CD4-positive, alpha-beta memory T cell (primary cell): ENCODE measurements at regions of chr4 and their contacts with region 1.

Region 1: DNA sequence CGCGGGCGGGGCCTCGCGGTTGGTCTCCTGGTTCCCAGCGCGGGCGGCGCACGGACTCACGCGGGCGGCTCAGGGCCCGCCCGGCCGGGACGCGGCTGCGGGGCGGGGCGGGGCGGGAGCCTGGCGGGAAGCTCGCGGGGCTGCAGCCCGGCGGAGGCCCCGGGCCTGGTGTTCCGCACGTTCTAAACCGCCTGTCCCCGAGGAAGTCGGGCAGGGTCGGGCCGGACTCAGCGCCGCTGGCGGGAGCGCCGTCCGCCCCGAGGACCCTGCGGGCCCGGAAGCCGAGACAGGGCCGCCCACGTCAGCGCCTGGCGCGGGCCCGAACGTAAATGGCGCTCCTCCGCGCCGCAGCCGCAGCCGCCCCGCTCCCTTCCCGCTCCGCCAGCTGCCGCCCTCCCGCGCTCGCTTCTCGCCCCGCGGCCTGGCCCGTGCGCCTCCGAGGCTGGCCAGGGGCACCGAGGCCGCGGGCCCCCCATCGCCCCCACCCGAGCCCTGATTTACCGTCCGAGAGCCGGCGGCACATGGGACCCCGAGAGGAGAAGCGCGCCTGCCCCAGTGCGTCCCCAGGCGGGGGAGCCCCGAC is 309 bp upstream of the CTBP1 start:
- DNase-seq: peak; percentile 77 to 93 (median 90)
- H3K4me3 ChIP-seq: peak overlapping the region; percentile 68 to 73
- H3K4me3 Mint-ChIP-seq: peak overlapping the region; percentile 86 to 92 (median 90)
- H3K27ac ChIP-seq: peak overlapping the region; percentile 88
- H3K27ac Mint-ChIP-seq: peak overlapping the region; percentile 93 to 99 (median 96)
- H3K4me1 ChIP-seq: peaks cover 74% of the 10 kb centered on the region
- H3K4me1 Mint-ChIP-seq: peaks cover 39 to 79% (median 67%) of the 10 kb centered on the region in 4 donors
- H3K27me3 ChIP-seq: no peaks in the 10 kb centered on the region
- H3K27me3 Mint-ChIP-seq: no peaks in the 10 kb centered on the region

Region 2: GRCh38 chr4:1200425-1201035 is 48.7 kb before region 1 on chr4:
- CTCF ChIA-PET with region 1: no interaction called
- POLR2A ChIA-PET with region 1: interaction called, 79 read pairs
- intact Hi-C with region 1: loop called (anchors 1 kb)
- DNase-seq: no peak
- H3K4me3 ChIP-seq: peak overlapping the region; percentile 49 to 58
- H3K4me3 Mint-ChIP-seq: peak overlapping the region; percentile 68 to 89 (median 82)
- H3K27ac ChIP-seq: peak overlapping the region; percentile 50
- H3K27ac Mint-ChIP-seq: peak overlapping the region; percentile 64 to 100 (median 98)
- H3K4me1 ChIP-seq: peaks cover 56% of the 10 kb centered on the region
- H3K4me1 Mint-ChIP-seq: peaks cover 23 to 61% (median 40%) of the 10 kb centered on the region in 4 donors
- H3K27me3 ChIP-seq: no peaks in the 10 kb centered on the region
- H3K27me3 Mint-ChIP-seq: no peaks in the 10 kb centered on the region

Region 3: GRCh38 chr4:1266881-1267763 is 17.9 kb after region 1 on chr4:
- CTCF ChIA-PET with region 1: interaction called, 42 read pairs
- POLR2A ChIA-PET with region 1: interaction called, 61 read pairs
- intact Hi-C with region 1: loop called (anchors 1 kb)
- DNase-seq: peak in 2 of 5 donors; percentile 25 to 36
- H3K4me3 ChIP-seq: peak overlapping the region in 1 of 2 donors; percentile 62
- H3K4me3 Mint-ChIP-seq: peak overlapping the region; percentile 75 to 90 (median 88)
- H3K27ac ChIP-seq: peak overlapping the region; percentile 63
- H3K27ac Mint-ChIP-seq: peak overlapping the region; percentile 94 to 100 (median 95)
- H3K4me1 ChIP-seq: peaks cover 12% of the 10 kb centered on the region
- H3K4me1 Mint-ChIP-seq: peaks cover 9 to 19% (median 12%) of the 10 kb centered on the region in 4 donors
- H3K27me3 ChIP-seq: no peaks in the 10 kb centered on the region
- H3K27me3 Mint-ChIP-seq: no peaks in the 10 kb centered on the region

Region 4: DNA sequence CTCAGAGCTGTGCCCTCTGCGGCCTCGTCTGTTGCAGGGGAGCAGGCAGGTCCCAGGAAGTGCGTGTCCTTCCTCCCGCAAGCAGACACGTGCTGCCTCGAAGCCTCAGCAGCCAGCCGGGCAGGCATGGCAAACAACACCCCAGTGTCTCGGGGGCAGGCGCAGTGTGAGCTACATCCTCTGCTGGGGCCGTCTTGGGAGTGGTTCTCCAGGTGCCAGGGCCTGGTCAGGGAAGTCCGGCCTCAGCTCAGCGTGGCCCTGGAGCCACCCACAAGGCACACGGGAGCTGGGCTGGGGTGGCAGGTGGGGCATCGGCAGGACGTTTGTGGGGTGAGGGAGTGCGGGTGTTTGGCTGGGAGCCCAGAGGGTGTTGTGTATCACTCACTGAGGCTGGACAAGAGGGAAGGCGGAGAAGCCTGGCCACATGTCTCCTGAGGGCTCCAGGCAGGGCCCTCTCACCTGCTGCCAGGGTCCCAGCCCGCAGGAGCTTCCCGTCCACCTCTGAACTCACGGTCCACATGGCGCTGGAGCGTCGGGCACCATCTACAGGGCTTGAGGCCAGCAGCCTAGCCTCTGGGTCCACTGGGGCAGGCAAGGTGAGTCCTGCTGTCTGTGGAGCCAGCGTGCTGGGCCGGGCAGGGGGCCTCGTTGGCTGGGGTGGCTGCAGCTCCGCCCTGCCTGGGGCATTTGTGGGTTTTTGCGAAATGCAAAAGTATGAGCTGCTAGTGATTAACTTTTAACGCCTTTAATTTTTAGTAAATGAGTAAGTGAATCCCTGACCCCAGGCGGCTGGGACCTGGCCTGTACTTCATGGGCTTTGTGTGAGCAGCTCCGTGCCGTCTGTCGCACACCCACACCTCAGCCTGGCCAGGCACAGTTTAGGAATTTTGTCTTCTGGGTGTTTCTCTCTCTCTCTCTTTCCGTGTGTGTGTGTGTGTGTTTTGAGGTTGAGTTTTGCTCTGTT is 80.5 kb after region 1 on chr4:
- CTCF ChIA-PET with region 1: no interaction called
- POLR2A ChIA-PET with region 1: interaction called, 33 read pairs
- intact Hi-C with region 1: no loop called
- DNase-seq: peak; percentile 51 to 77 (median 57)
- H3K4me3 ChIP-seq: no peak overlapping the region
- H3K4me3 Mint-ChIP-seq: peak overlapping the region; percentile 26 to 88 (median 82)
- H3K27ac ChIP-seq: peak overlapping the region; percentile 47
- H3K27ac Mint-ChIP-seq: peak overlapping the region; percentile 86 to 100 (median 97)
- H3K4me1 ChIP-seq: peaks cover 46% of the 10 kb centered on the region
- H3K4me1 Mint-ChIP-seq: peaks cover 18 to 53% (median 32%) of the 10 kb centered on the region in 4 donors
- H3K27me3 ChIP-seq: no peaks in the 10 kb centered on the region
- H3K27me3 Mint-ChIP-seq: no peaks in the 10 kb centered on the region